MCF 10A (cell line): ENCODE measurements at regions of chr5 and their contacts with region 1.

Region 1: GRCh38 chr5:34968258-34968657 is 38.9 kb downstream of the DNAJC21 start:
- DNase-seq: no peak
- H3K4me3 Mint-ChIP-seq: no peak overlapping the region
- H3K27ac Mint-ChIP-seq: no peak overlapping the region
- H3K4me1 Mint-ChIP-seq: no peaks in the 10 kb centered on the region
- H3K27me3 Mint-ChIP-seq: no peaks in the 10 kb centered on the region
- CTCF ChIP-seq: no peak

Region 2: DNA sequence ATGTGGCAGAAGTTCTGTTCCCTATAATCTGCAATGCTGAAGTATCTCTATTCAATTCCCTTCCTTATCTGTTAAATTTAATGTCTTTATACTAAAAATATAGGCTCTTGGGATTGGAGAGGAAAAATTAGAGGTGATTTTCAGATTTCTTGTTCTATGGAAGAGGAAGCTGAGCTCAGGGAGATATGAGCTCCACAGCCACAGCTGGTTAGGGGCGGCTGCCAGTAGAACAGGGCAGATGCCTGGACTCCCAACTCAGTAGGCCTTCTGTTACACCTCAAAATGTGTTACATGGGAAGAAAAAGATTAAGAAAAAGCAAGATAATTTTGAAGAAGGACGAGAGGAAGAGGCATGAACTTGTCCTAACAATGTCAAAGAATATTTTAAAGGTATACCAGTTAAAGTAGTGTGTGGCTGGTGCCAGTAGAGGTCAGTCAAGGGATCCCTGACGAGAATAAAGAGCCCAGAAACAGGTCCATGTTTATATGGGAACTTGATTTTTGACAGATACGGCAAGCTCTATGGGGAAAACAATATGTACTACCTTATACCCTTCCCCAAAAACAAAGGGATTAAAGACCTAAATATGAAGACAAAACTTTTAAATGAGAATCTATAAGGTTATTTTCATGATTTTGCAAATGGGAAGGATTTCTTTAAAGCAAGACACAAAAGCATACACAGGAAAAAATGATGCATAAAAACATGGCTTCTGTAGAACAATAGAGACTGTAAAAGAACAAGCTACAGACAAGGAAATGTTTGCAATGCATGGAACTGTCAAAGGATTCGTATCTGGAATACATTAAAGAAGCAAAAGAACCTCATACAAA is 10.2 kb before region 1 on chr5:
- CTCF ChIA-PET with region 1: interaction called, 14 read pairs
- POLR2A ChIA-PET with region 1: no interaction called
- intact Hi-C with region 1: no loop called
- DNase-seq: peak; percentile 48
- H3K4me3 Mint-ChIP-seq: no peak overlapping the region
- H3K27ac Mint-ChIP-seq: no peak overlapping the region
- H3K4me1 Mint-ChIP-seq: peaks cover 7% of the 10 kb centered on the region
- H3K27me3 Mint-ChIP-seq: no peaks in the 10 kb centered on the region
- CTCF ChIP-seq: peak; percentile 33